Naive thymus-derived CD4-positive, alpha-beta T cell (primary cell): ENCODE measurements at regions of chr17 and their contacts with region 1.

Region 1: GRCh38 chr17:49223517-49224197 is 6.9 kb downstream of the PHOSPHO1 start:
- DNase-seq: peak in 8 of 9 donors; percentile 33 to 76 (median 52)
- ATAC-seq: peak; percentile 37
- H3K4me3 ChIP-seq: peak overlapping the region; percentile 56
- H3K4me3 Mint-ChIP-seq: peak overlapping the region; percentile 78 to 90 (median 84)
- H3K27ac ChIP-seq: no peak overlapping the region
- H3K27ac Mint-ChIP-seq: peak overlapping the region in 7 of 9 donors; percentile 9 to 80 (median 45)
- H3K4me1 ChIP-seq: peaks cover 32 to 48% of the 10 kb centered on the region in 2 donors
- H3K4me1 Mint-ChIP-seq: peaks cover 12 to 53% (median 32%) of the 10 kb centered on the region in 7 donors
- H3K27me3 ChIP-seq: no peaks in the 10 kb centered on the region
- H3K27me3 Mint-ChIP-seq: peaks cover 0 to 18% (median 0%) of the 10 kb centered on the region in 5 donors

Region 2: GRCh38 chr17:49210158-49211029 is 13.3 kb before region 1 on chr17 and contains the starts of genes ABI3 and GNGT2:
- CTCF ChIA-PET with region 1: interaction called, 12 read pairs
- POLR2A ChIA-PET with region 1: interaction called, 9 read pairs
- intact Hi-C with region 1: loop called (anchors 1 kb)
- DNase-seq: peak; percentile 23 to 70 (median 62)
- ATAC-seq: peak; percentile 88
- H3K4me3 ChIP-seq: peak within 1 kb of the TSS; percentile 84
- H3K4me3 Mint-ChIP-seq: peak within 1 kb of the TSS; percentile 72 to 96 (median 93)
- H3K27ac ChIP-seq: peak within 1 kb of the TSS; percentile 82
- H3K27ac Mint-ChIP-seq: peak within 1 kb of the TSS; percentile 80 to 95 (median 89)
- H3K4me1 ChIP-seq: peaks cover 54 to 58% of the 10 kb centered on the region in 2 donors
- H3K4me1 Mint-ChIP-seq: peaks cover 63 to 81% (median 71%) of the 10 kb centered on the region in 7 donors
- H3K27me3 ChIP-seq: no peaks in the 10 kb centered on the region
- H3K27me3 Mint-ChIP-seq: no peaks in the 10 kb centered on the region
- total RNA-seq, gene ABI3: 8.2 to 57.8 (median 11.0) TPM
- total RNA-seq, gene GNGT2: 2.8 to 16.9 (median 5.1) TPM